Tibial artery (tissue), 4 donors: ENCODE measurements at regions of chr10 and their contacts with region 1.

Region 1: DNA sequence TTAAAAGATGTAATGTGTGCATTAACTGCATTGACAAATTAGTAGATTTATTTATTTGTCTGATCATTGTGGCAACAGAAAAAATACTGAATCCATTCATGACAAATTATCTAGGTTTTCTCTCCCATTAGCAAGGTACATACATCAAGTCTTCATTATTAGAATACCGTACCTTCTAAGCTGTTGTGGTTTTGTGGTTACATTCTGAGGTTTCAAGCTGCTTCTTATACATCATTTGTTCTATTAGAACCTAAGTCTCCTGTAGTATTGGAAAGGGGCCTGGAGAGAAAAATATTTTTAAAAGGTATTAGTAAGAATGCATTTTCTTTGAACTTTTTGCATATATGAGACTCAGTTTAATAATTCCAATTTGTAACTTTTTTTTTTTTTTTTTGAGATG is 26.3 kb upstream of the CACNB2 start:
- DNase-seq: no peak
- H3K4me3 ChIP-seq: no peak overlapping the region
- H3K27ac ChIP-seq: no peak overlapping the region
- H3K4me1 ChIP-seq: no peaks in the 10 kb centered on the region
- H3K27me3 ChIP-seq: no peaks in the 10 kb centered on the region
- CTCF ChIP-seq: no peak

Region 2: GRCh38 chr10:17923728-17924127 is 190.2 kb before region 1 on chr10:
- intact Hi-C with region 1: loop called (anchors 10 kb)
- DNase-seq: peak; percentile 44 to 83
- H3K4me3 ChIP-seq: no peak overlapping the region
- H3K27ac ChIP-seq: peak overlapping the region; percentile 67 to 80
- H3K4me1 ChIP-seq: peaks cover 0 to 21% (median 4%) of the 10 kb centered on the region in 4 donors
- H3K27me3 ChIP-seq: no peaks in the 10 kb centered on the region
- CTCF ChIP-seq: no peak

Region 3: GRCh38 chr10:18087355-18087754 is 26.5 kb before region 1 on chr10:
- intact Hi-C with region 1: no loop called
- DNase-seq: no peak
- H3K4me3 ChIP-seq: no peak overlapping the region
- H3K27ac ChIP-seq: no peak overlapping the region
- H3K4me1 ChIP-seq: no peaks in the 10 kb centered on the region
- H3K27me3 ChIP-seq: no peaks in the 10 kb centered on the region
- CTCF ChIP-seq: no peak